ENCODE measurements at regions of chr5 and their contacts with region 1.

Region 1: GRCh38 chr5:671459-672328 is 21.5 kb downstream of the TPPP start:
- DNase-seq: peak; percentile 84
- ATAC-seq: peak; percentile 75 to 83

Region 2: GRCh38 chr5:759111-759751 is 87.5 kb after region 1 on chr5:
- intact Hi-C with region 1: no loop called
- DNase-seq: peak; percentile 94
- ATAC-seq: peak; percentile 67 to 80

Region 3: GRCh38 chr5:902129-902916 is 230.6 kb after region 1 on chr5:
- intact Hi-C with region 1: loop called (anchors 5 kb)
- DNase-seq: no peak
- ATAC-seq: no peak

Region 4: DNA sequence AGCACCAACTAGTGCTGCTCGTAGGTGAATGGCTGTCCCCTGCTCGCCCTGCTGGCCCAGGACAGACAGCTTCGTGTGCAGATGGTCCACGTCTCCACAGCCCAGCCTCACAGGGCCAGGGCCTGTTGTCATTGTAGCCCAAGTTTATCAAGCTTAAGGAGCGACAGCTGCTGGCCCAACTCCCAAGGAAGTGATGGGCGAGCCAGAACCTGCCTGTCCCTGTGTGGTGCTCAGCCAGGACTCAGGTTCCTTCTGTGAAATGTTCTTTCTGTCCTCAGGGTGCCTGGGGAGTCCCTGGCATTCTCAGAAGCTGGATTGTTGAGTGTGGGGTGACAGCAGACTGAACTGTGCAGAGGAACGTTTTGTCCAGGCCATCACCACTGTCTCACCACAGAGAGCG is 237.4 kb after region 1 on chr5:
- intact Hi-C with region 1: loop called (anchors 5 kb)
- DNase-seq: no peak
- ATAC-seq: no peak